Activated CD4-positive, alpha-beta memory T cell treated with anti-CD3 and anti-CD28 coated beads, Interleukin-2, amount 10 ng/mL, durations not matched to agents 7 days and 5 days (primary cell): ENCODE measurements at regions of chr17 and their contacts with region 1.

Region 1: GRCh38 chr17:3683054-3683511 is 12.9 kb downstream of the P2RX5 start:
- DNase-seq: peak; percentile 67
- H3K4me3 Mint-ChIP-seq: no peak overlapping the region
- H3K27ac Mint-ChIP-seq: no peak overlapping the region
- H3K4me1 Mint-ChIP-seq: peaks cover 27% of the 10 kb centered on the region
- H3K27me3 Mint-ChIP-seq: no peaks in the 10 kb centered on the region

Region 2: DNA sequence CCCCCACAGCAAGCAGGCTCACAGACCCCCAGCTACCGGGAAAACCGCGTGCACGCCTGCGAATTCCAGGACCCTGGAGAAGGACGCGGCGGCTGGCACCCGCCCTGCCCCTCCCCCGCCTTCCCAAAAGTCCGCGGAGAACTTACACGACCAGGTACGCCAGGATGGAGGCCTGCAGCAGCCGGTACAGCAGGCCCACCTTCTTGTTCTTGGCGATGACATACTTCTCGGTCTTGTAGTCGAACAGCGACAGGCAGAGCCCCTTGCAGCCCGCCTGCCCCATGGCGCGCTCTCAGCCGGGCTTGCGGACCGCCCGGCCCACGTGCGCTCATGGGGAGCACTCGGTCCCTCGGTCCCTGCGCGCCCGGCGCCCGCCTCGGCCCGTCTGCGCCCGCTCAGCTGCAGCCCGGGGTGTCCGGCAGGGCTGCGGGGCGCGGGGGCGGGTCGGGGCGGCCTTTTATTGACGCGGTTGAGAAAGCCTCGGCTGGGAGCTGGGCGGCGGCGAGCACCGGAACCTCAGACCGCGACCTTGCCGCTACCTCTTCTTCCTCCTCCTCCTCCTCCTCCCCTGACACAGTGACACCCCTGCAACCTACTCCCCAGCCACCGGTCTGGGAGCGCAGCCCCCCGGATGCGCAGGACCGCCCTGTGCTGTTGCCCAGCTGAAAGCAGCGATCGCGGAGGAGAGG is 12.8 kb after region 1 on chr17 and contains the start of gene P2RX5:
- CTCF ChIA-PET with region 1: interaction called, 12 read pairs
- POLR2A ChIA-PET with region 1: no interaction called
- DNase-seq: peak; percentile 61
- H3K4me3 Mint-ChIP-seq: peak within 1 kb of the TSS; percentile 85
- H3K27ac Mint-ChIP-seq: peak within 1 kb of the TSS; percentile 79
- H3K4me1 Mint-ChIP-seq: peaks cover 34% of the 10 kb centered on the region
- H3K27me3 Mint-ChIP-seq: no peaks in the 10 kb centered on the region
- total RNA-seq, gene P2RX5: 30.8 to 31.1 TPM

Region 3: DNA sequence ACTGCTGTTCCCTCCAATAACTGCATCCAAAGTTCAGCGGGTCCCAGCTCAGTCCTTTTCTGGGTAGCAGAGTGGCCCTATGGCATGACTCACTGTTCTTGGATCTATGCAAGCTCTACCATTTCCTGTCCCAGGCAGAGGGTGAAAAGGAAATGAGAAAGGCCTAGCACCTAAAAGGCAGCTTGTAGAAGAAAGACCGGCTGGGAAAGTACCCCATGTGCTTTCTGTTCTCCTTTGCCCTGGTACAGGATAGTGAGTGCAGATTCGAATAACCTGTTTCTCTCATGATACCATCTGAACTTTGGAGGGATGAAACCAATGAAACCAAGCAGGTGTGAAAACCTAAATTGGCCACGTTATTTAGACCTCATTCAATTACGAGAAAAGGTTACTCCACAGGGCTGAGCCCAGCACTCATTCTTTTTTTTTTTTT is 27.9 kb after region 1 on chr17:
- CTCF ChIA-PET with region 1: interaction called, 12 read pairs
- POLR2A ChIA-PET with region 1: interaction called, 3 read pairs
- DNase-seq: peak; percentile 82
- H3K4me3 Mint-ChIP-seq: peak overlapping the region; percentile 68
- H3K27ac Mint-ChIP-seq: peak overlapping the region; percentile 97
- H3K4me1 Mint-ChIP-seq: peaks cover 59% of the 10 kb centered on the region
- H3K27me3 Mint-ChIP-seq: no peaks in the 10 kb centered on the region

Region 4: GRCh38 chr17:3827124-3827773 is 144.2 kb after region 1 on chr17:
- CTCF ChIA-PET with region 1: interaction called, 21 read pairs
- POLR2A ChIA-PET with region 1: no interaction called
- DNase-seq: peak; percentile 76
- H3K4me3 Mint-ChIP-seq: no peak overlapping the region
- H3K27ac Mint-ChIP-seq: peak overlapping the region; percentile 36
- H3K4me1 Mint-ChIP-seq: peaks cover 9% of the 10 kb centered on the region
- H3K27me3 Mint-ChIP-seq: no peaks in the 10 kb centered on the region